A549 (cell line): ENCODE measurements at regions of chr2 and their contacts with region 1.

Region 1: DNA sequence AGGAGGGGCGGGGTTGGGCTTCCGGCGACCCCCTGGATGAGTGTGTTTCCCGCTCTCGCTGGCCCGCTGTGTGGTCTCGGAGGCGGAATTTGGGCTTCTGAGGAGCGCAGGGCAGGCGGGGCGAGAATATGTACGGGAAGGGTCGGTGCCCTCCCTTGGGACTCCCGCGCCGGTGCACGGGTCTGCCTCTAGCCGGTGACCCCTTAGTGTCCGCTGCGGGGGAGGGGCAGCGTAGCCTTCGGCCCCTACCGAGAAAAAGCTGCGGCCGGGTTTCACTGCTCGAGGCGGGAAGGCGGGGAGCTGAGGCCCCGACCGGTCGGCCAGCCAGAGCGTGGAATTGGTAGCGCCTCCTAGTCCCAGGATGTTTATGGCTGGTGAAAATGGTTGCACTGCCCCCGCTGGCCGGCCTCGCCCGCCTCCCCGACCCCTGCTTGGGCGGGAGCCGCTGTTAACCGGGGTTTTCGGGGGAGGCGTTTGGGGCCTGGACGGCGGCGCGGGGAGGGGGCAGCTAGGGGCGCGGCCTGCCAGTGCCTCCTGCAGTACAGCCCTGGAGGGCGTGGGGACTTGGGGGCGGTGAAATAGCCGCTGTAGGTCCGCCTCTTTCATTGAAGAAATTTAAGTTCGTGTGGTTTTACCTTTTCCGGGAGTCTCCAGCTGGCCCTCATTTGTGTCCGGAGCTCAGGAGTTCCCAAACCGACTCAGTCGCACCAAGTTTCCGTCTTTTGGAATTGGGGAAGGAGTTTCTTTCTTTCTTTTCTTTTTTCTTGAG is at the start of gene UGP2:
- DNase-seq: peak; percentile 75 to 95
- ATAC-seq: peak; percentile 75 to 91
- H3K4me3 ChIP-seq: peak within 1 kb of the TSS; percentile 93
- H3K27ac ChIP-seq: peak within 1 kb of the TSS; percentile 94 to 98
- H3K4me1 ChIP-seq: peaks cover 17% of the 10 kb centered on the region; the same call in 2 of the 3 replicates
- CTCF ChIP-seq: peak; percentile 35
- EP300 ChIP-seq: no peak
- POLR2A ChIP-seq: peak; percentile 60
- RAD21 ChIP-seq: peak in 1 of 2 experiments; percentile 52; a peak in 3 of 5 replicates
- polyA plus RNA-seq, gene UGP2: 136 and 162 TPM in 2 replicates

Region 2: DNA sequence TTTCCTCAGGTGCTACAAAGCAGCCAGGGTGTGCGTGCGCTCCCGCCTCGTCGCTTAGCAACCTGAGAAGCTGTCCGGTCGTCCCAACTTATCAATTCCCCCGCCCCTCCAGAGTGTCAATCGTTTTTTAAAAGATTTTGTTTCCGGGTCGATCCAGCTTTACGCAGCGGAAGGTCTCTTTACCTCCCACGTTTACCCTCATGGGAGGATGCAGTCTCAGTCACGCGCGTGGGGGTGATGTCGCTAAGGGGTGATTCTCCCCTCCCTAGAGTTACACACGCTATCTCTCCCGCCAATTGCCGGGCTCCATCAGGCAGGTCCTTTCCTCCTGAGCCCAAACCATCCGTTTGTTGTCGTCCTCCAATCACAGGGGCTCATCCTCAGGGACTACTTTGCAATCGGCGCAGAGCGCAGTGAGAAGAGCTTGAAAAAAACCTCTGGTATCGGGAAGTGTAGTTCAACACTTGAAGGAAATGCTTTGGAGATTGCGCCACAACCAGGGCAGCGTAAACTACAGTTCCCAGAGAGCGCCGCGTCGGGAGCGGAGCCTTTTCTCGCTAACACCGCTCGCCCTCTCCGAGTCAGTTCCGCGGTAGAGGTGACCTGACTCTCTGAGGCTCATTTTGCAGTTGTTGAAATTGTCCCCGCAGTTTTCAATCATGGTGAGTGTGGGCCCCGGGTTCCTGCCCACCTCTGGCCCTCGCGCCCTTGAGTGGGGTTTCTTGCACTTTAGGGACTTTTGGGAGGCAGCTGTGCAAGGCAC is 252.9 kb before region 1 on chr2 and contains the starts of genes MDH1 and WDPCP:
- CTCF ChIA-PET with region 1: no interaction called
- POLR2A ChIA-PET with region 1: interaction called, 21 read pairs
- DNase-seq: peak; percentile 89 to 100
- ATAC-seq: peak; percentile 94 to 97
- H3K4me3 ChIP-seq: peak within 1 kb of the TSS; percentile 93
- H3K27ac ChIP-seq: peak within 1 kb of the TSS; percentile 78 to 92
- H3K4me1 ChIP-seq: peaks cover 24% of the 10 kb centered on the region
- CTCF ChIP-seq: no peak
- EP300 ChIP-seq: no peak
- POLR2A ChIP-seq: peak; percentile 74
- RAD21 ChIP-seq: no peak
- polyA plus RNA-seq, gene MDH1: 425 and 450 TPM in 2 replicates
- polyA plus RNA-seq, gene WDPCP: 6.8 and 7.6 TPM in 2 replicates

Region 3: GRCh38 chr2:63676135-63676534 is 165.3 kb before region 1 on chr2:
- CTCF ChIA-PET with region 1: no interaction called
- POLR2A ChIA-PET with region 1: no interaction called
- DNase-seq: no peak
- ATAC-seq: no peak
- H3K4me3 ChIP-seq: no peak overlapping the region
- H3K27ac ChIP-seq: no peak overlapping the region
- H3K4me1 ChIP-seq: no peaks in the 10 kb centered on the region
- CTCF ChIP-seq: no peak
- EP300 ChIP-seq: no peak
- POLR2A ChIP-seq: no peak
- RAD21 ChIP-seq: no peak

Region 4: GRCh38 chr2:63736354-63736753 is 105.1 kb before region 1 on chr2:
- CTCF ChIA-PET with region 1: interaction called, 7 read pairs
- POLR2A ChIA-PET with region 1: interaction called, 19 read pairs
- DNase-seq: no peak
- ATAC-seq: no peak
- H3K4me3 ChIP-seq: no peak overlapping the region
- H3K27ac ChIP-seq: peak overlapping the region; percentile 78 to 83; a peak in 5 of 6 replicates
- H3K4me1 ChIP-seq: peaks cover 65% of the 10 kb centered on the region
- CTCF ChIP-seq: no peak
- EP300 ChIP-seq: no peak
- POLR2A ChIP-seq: no peak
- RAD21 ChIP-seq: no peak

Region 5: DNA sequence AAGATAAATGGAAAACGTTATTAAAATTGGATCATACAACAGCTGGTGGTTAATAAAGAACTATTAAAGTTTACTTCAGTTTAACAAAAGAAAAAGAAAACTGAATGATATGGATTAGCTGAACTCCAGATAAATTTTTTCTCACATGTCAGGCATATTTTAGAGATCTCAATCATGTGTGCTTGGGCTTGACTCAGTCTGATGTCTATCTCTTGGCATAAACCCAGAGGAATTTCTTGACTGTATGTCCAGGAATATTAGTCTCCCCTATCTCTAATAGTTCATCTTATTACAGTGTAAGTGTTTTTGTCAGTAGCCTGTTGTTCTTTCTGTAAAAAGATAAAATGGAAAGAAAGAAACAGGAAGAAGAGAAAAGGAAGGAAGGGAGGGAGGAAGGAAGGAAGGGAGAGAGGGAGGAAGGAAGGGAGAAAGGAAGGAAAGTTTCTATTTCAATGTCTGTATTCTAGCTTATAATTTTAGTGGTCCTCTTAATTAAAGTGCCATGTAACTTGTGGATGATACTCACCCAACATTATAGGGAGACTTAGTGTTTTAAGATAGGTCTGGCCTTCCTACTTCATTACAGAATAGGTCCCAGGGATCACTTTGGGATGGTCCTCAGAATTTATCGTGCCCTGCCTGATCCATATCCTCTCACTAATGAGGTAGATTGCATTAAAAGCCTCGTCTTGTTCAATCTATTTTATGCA is 99.4 kb before region 1 on chr2:
- CTCF ChIA-PET with region 1: interaction called, 5 read pairs
- POLR2A ChIA-PET with region 1: interaction called, 14 read pairs
- DNase-seq: peak in 1 of 2 experiments; percentile 29
- ATAC-seq: peak; percentile 54 to 72; a peak in 4 of 6 replicates
- H3K4me3 ChIP-seq: no peak overlapping the region
- H3K27ac ChIP-seq: peak overlapping the region; percentile 37 to 51; a peak in 5 of 6 replicates
- H3K4me1 ChIP-seq: peaks cover 60% of the 10 kb centered on the region
- CTCF ChIP-seq: no peak
- EP300 ChIP-seq: no peak
- POLR2A ChIP-seq: no peak
- RAD21 ChIP-seq: no peak

Region 6: DNA sequence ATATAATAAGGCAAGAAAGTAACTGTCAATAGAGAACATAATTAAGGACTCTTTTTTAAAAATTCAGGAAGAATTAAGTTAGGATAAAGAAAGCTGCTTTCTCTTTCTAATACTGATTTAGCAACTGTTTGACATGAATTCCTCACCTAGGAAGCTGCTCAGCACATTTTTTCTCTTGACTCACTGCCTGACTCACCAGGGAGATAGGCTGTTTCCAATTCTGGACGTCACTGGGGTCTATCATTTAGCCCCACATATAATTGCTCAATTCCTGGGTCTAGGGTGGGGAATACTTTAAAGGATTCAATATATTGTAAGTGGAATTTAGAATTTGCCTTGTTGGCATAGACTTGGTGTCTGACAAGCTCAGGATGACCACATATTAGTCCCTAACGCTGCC is 50.5 kb before region 1 on chr2:
- CTCF ChIA-PET with region 1: interaction called, 3 read pairs
- POLR2A ChIA-PET with region 1: interaction called, 12 read pairs
- DNase-seq: peak; percentile 10 to 29
- ATAC-seq: peak; percentile 81 to 90; a peak in 5 of 6 replicates
- H3K4me3 ChIP-seq: no peak overlapping the region
- H3K27ac ChIP-seq: peak overlapping the region; percentile 31 to 38; a peak in 5 of 6 replicates
- H3K4me1 ChIP-seq: peaks cover 17% of the 10 kb centered on the region; the same call in 2 of the 3 replicates
- CTCF ChIP-seq: no peak
- EP300 ChIP-seq: no peak
- POLR2A ChIP-seq: no peak
- RAD21 ChIP-seq: no peak

Region 7: GRCh38 chr2:63861220-63861822 is 19.9 kb after region 1 on chr2:
- CTCF ChIA-PET with region 1: interaction called, 56 read pairs
- POLR2A ChIA-PET with region 1: interaction called, 10 read pairs
- DNase-seq: peak; percentile 32 to 77
- ATAC-seq: peak; percentile 39 to 83; a peak in 5 of 6 replicates
- H3K4me3 ChIP-seq: no peak overlapping the region
- H3K27ac ChIP-seq: no peak overlapping the region
- H3K4me1 ChIP-seq: peaks cover 29% of the 10 kb centered on the region
- CTCF ChIP-seq: peak; percentile 88
- EP300 ChIP-seq: no peak
- POLR2A ChIP-seq: no peak
- RAD21 ChIP-seq: peak; percentile 85 to 87

Region 8: GRCh38 chr2:64023485-64024258 is 182.2 kb after region 1 on chr2:
- CTCF ChIA-PET with region 1: no interaction called
- POLR2A ChIA-PET with region 1: no interaction called
- DNase-seq: peak in 1 of 2 experiments; percentile 24
- ATAC-seq: peak in 1 of 2 experiments; percentile 30; a peak in 1 of 6 replicates
- H3K4me3 ChIP-seq: no peak overlapping the region
- H3K27ac ChIP-seq: no peak overlapping the region
- H3K4me1 ChIP-seq: peaks cover 24% of the 10 kb centered on the region
- CTCF ChIP-seq: no peak
- EP300 ChIP-seq: no peak
- POLR2A ChIP-seq: no peak
- RAD21 ChIP-seq: no peak

Region 9: DNA sequence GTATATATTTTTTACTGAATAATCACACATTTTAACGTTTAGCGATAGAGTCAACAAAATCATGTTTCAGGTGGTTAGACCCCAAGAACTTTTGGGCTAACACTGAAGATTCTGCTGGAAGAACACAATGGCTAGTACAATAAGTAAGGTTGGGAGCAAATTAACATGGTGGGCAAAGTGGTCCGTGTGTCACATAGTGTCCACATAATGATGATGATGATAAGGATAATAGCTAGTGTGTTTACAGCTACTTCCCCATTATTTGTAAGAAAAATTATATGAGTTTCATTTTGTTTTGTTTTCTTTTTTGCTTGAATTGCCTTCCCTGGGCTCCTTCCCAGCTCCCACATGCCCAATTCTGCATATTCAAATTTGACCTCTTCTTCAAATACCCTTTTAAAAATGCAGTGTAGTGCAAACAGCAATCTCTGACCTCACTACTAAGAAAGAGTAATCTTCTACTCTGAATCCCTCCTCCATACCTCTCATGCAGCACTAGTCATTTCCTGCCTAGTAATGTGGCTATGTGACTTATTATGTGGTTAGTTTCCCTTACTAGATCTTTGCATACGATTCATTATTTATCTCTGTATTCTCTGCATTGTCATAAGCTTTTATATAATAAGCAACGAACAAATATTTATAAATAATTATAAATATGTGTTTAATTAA is 194.7 kb after region 1 on chr2:
- CTCF ChIA-PET with region 1: no interaction called
- POLR2A ChIA-PET with region 1: no interaction called
- DNase-seq: no peak
- ATAC-seq: no peak
- H3K4me3 ChIP-seq: no peak overlapping the region
- H3K27ac ChIP-seq: no peak overlapping the region
- H3K4me1 ChIP-seq: no peaks in the 10 kb centered on the region
- CTCF ChIP-seq: no peak
- EP300 ChIP-seq: no peak
- POLR2A ChIP-seq: no peak
- RAD21 ChIP-seq: no peak